Activated B cell treated with CpG ODN at 0.5 μM for 24 hours (primary cell): ENCODE measurements at regions of chr12 and their contacts with region 1.

Region 1: GRCh38 chr12:22544038-22544979 is at the start of gene C2CD5:
- DNase-seq: peak; percentile 86
- ATAC-seq: peak; percentile 89
- H3K4me3 Mint-ChIP-seq: peak within 1 kb of the TSS; percentile 92
- H3K27ac Mint-ChIP-seq: peak within 1 kb of the TSS; percentile 96
- H3K4me1 Mint-ChIP-seq: peaks cover 42% of the 10 kb centered on the region
- H3K27me3 Mint-ChIP-seq: no peaks in the 10 kb centered on the region
- CTCF ChIP-seq: no peak
- total RNA-seq, gene C2CD5: 30.7 and 38.4 TPM in 2 replicates

Region 2: GRCh38 chr12:21438643-21439042 is 1105.7 kb before region 1 on chr12:
- CTCF ChIA-PET with region 1: no interaction called
- POLR2A ChIA-PET with region 1: no interaction called
- intact Hi-C with region 1: loop called (anchors 2 kb)
- DNase-seq: no peak
- ATAC-seq: no peak
- H3K4me3 Mint-ChIP-seq: peak overlapping the region; percentile 99
- H3K27ac Mint-ChIP-seq: peak overlapping the region; percentile 97
- H3K4me1 Mint-ChIP-seq: peaks cover 27% of the 10 kb centered on the region
- H3K27me3 Mint-ChIP-seq: peaks cover 2% of the 10 kb centered on the region
- CTCF ChIP-seq: no peak

Region 3: DNA sequence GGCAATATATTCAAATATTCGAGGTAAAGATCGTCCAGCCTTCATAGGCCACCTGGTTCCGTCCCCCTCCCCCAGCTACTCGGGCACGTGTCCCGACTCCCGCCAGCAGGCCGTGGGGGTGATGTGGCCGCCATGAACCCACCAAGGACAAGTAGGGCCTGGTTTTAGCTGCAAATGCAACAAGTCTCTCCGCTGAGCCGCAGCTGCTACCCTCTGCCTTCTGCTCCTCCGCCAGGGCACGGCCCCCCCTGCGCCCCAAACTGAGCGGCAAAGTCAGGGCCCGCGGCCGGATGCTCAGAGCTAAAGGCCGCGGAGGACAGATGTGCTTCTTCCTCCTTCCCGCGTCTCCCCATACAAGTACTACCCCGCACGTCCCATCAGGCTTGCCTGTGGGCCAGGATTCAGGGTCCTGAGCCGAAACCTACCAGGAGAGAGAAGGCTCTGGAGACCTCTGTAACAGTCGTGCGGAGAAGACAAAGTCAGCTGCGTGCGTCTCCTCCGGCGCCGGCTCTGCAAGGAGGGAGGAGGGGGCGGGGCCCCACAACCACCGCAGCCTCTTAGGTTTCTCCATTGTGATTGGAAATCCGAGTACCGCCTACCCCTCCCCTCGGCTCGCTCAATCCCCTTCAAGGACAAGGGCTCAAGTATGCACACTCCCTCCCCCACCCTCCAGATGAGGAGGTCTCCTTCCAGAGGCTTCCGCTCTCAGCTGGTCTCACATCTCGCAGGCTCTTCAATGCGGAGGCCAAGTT is 886.8 kb before region 1 on chr12 and contains the start of gene LDHB:
- CTCF ChIA-PET with region 1: no interaction called
- POLR2A ChIA-PET with region 1: interaction called, 7 read pairs
- intact Hi-C with region 1: loop called (anchors 1 kb)
- DNase-seq: peak; percentile 72
- ATAC-seq: peak; percentile 97
- H3K4me3 Mint-ChIP-seq: peak within 1 kb of the TSS; percentile 99
- H3K27ac Mint-ChIP-seq: peak within 1 kb of the TSS; percentile 97
- H3K4me1 Mint-ChIP-seq: peaks cover 24% of the 10 kb centered on the region
- H3K27me3 Mint-ChIP-seq: peaks cover 3% of the 10 kb centered on the region
- CTCF ChIP-seq: no peak
- total RNA-seq, gene LDHB: 385 and 440 TPM in 2 replicates

Region 4: DNA sequence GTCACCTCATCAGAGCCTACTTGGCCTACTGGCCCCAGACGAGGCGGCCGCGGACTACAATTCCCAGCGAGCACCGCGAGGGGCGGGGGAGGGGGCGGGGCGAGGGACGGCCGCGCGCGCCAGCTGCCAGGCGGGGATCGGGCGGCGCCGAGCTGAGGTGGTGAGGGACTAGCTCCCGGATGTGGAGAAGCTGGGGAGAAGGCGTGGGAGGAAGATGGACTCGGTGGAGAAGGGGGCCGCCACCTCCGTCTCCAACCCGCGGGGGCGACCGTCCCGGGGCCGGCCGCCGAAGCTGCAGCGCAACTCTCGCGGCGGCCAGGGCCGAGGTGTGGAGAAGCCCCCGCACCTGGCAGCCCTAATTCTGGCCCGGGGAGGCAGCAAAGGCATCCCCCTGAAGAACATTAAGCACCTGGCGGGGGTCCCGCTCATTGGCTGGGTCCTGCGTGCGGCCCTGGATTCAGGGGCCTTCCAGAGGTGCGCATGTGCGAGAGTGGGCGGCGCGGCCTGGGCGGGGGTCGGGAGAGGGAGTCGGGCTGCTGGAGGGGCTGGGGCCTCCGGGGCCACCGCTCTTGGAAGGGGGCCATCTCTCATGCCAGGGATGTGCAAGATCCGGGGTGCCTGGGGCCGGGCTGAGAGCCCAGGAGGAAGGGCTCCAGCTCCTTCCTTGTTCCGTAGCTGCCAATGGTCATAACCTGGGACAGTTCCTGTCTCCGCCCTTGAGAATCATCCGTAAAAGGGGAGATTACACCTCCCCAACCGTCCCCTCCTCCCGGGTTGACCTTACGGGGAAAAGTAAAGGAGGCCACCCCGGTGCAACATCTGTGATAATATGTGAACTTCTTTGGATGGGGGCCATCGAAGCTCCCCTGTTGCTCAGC is 498.0 kb before region 1 on chr12 and contains the start of gene CMAS:
- CTCF ChIA-PET with region 1: no interaction called
- POLR2A ChIA-PET with region 1: no interaction called
- intact Hi-C with region 1: loop called (anchors 1 kb)
- DNase-seq: peak; percentile 62
- ATAC-seq: peak; percentile 91
- H3K4me3 Mint-ChIP-seq: peak within 1 kb of the TSS; percentile 94
- H3K27ac Mint-ChIP-seq: peak within 1 kb of the TSS; percentile 81
- H3K4me1 Mint-ChIP-seq: peaks cover 15% of the 10 kb centered on the region
- H3K27me3 Mint-ChIP-seq: peaks cover 1% of the 10 kb centered on the region
- CTCF ChIP-seq: no peak
- total RNA-seq, gene CMAS: 15.8 and 16.2 TPM in 2 replicates

Region 5: DNA sequence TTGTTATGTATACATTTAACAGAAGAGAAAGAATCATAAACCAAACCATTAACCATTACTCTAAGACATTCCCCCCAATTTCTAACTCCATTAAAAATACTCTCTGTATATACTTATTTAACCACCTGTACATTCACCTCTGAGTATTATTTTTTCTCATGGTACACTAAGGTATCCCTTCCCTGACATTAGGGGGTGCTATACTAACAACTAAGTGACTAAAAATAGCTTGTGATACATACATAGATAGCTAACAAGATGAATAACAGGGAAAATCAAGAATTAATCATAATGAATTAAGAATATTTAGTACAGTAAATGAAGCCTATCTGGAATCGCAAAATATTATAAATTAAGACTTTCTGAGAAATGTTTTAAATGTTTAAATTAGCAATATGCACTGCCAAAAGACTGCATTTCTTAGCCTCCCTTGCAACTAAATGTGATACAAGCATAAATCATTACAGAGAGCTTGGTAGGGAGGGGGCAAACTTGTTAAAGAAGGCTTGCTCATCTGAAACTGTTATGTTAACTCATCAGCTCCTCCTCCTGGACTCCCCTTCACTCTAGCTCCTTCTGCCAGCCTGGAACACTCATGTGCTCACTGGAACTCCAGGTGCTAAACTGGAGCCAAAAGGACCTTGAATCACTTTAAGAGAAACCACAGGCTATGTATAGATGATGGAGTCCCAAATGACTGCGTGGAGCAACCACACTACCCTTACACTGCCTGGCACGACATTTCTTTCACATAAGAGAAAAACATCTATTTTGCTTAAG is 14.8 kb before region 1 on chr12:
- CTCF ChIA-PET with region 1: interaction called, 9 read pairs
- POLR2A ChIA-PET with region 1: interaction called, 10 read pairs
- intact Hi-C with region 1: loop called (anchors 2 kb)
- DNase-seq: no peak
- ATAC-seq: peak; percentile 64
- H3K4me3 Mint-ChIP-seq: no peak overlapping the region
- H3K27ac Mint-ChIP-seq: no peak overlapping the region
- H3K4me1 Mint-ChIP-seq: no peaks in the 10 kb centered on the region
- H3K27me3 Mint-ChIP-seq: no peaks in the 10 kb centered on the region
- CTCF ChIP-seq: no peak

Region 6: DNA sequence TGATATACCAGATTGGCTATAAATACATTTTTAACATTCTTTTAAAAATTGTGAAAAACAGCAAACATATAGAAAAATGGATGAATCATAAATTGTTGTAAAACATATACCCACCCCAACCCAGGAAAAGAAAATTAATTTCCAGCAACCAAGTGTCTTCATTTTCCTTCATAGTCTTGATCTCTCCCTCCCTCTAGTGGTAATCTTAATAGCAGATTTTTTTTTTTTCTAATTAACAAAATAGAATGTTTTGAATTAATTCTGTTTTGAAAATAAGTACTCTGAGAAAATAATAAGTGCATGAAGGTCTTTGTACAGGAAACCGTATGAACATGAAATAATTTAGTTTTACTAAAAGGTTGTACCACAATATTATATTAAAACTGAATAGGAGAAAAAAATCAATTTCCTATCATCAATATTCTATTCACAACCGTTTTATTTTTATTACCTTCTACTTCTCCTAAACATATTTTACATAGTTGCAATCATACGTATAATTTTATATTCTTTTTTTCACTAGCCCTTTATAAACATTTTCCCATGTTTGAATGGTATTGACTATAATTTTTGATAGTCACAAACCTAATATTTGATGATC is 87.7 kb after region 1 on chr12:
- CTCF ChIA-PET with region 1: interaction called, 3 read pairs
- POLR2A ChIA-PET with region 1: interaction called, 11 read pairs
- intact Hi-C with region 1: loop called (anchors 1 kb)
- DNase-seq: no peak
- ATAC-seq: no peak
- H3K4me3 Mint-ChIP-seq: no peak overlapping the region
- H3K27ac Mint-ChIP-seq: no peak overlapping the region
- H3K4me1 Mint-ChIP-seq: peaks cover 66% of the 10 kb centered on the region
- H3K27me3 Mint-ChIP-seq: no peaks in the 10 kb centered on the region
- CTCF ChIP-seq: peak; percentile 52